ENCODE measurements at regions of chr10 and their contacts with region 1.

Region 1: GRCh38 chr10:28343987-28344897 is 41.4 kb upstream of the MPP7 start:
- DNase-seq: peak; percentile 34
- H3K4me3 ChIP-seq: no peak overlapping the region
- H3K27ac ChIP-seq: no peak overlapping the region
- H3K4me1 ChIP-seq: no peaks in the 10 kb centered on the region
- H3K27me3 ChIP-seq: no peaks in the 10 kb centered on the region
- CTCF ChIP-seq: no peak
- EP300 ChIP-seq: no peak
- POLR2A ChIP-seq: no peak

Region 2: DNA sequence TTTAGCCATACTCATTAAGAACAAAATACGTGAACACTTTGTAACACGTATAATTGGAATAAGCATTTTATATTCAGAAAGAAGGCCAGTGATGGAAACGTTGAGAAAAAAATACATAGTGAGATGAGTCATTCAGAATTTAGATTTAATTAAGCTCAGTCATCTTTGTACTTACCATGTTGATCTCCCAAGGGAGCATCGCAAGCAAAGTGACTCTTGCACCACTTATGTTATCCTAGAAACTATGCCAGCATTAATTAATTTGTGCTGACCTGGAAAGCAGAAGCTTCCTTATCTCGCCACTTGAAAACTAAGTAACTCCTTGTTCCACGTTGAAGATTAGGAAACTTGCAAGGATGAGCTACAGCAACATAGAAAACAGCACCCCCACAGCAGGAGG is 31.7 kb before region 1 on chr10:
- intact Hi-C with region 1: no loop called
- DNase-seq: no peak
- H3K4me3 ChIP-seq: no peak overlapping the region
- H3K27ac ChIP-seq: no peak overlapping the region
- H3K4me1 ChIP-seq: peaks cover 0 to under 1% (median under 1%) of the 10 kb centered on the region in 4 donors
- H3K27me3 ChIP-seq: no peaks in the 10 kb centered on the region
- CTCF ChIP-seq: no peak
- EP300 ChIP-seq: no peak
- POLR2A ChIP-seq: no peak

Region 3: DNA sequence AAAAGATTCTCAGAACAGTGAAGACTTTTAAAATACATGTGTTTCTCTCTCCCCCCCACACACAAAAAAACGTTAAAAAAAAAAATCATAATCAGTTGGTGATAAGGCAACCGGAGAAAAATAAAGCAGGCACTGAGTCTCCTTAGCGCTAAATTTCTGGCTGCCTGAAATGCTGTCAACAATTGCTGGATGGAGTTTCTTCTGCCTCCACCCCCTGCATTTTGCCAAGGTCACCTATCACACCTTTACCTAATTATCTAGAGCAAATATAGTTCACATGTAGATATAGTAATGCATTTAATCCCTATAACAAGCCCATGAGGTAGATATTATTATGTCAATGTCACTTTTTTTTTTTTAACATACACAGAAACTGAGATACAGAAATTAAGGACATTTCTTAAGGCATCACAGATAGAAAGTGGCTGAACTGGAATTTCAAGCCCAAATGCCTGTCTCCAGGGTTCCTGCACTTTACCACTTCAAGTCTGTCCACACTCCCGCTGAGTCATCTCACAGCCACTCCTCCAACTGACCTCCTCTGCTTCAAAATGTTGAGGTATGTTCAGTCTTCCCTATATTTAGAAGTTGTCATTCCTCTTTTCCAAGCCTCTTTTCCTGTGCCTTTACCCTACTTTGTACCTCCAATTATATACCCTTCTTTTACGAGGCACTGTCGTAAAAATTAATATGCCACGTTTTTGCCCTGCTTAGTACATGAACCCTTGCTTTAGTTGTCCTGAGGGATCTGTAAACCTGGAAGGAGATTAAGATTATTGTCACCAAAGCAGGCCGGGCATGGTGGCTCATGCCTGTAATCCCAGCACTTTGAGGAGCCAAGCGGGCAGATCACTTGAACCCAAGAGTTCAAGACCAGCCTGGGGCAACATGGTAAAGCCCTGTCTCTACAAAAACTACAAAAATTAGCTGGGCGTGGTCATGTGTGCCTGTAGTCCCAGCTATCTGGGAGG is 31.4 kb after region 1 on chr10:
- intact Hi-C with region 1: loop called (anchors 5 kb)
- DNase-seq: no peak
- H3K4me3 ChIP-seq: no peak overlapping the region
- H3K27ac ChIP-seq: peak overlapping the region in 1 of 4 donors; percentile 20
- H3K4me1 ChIP-seq: peaks cover 0 to 15% (median 2%) of the 10 kb centered on the region in 4 donors
- H3K27me3 ChIP-seq: no peaks in the 10 kb centered on the region
- CTCF ChIP-seq: no peak
- EP300 ChIP-seq: no peak
- POLR2A ChIP-seq: no peak

Region 4: DNA sequence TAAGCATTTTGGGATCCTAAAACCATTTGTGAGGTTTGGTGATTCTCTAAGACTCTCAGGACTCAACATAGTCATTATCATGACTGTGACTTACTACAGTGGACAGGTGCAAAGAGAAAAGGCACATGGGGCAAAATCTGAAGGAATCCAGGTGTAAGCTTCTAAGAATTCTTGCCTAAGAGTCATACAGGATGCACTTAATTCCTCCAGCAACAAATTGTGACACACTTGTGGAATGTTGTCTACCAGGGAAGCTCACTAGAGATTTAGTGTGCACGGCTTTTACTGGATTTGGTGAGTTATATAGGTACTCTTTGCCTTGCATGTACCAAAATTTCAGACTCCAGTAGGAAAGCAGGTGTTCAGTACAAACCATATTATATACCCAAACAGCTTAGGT is 236.6 kb after region 1 on chr10:
- intact Hi-C with region 1: no loop called
- DNase-seq: no peak
- H3K4me3 ChIP-seq: no peak overlapping the region
- H3K27ac ChIP-seq: no peak overlapping the region
- H3K4me1 ChIP-seq: peaks cover 57 to 75% (median 64%) of the 10 kb centered on the region in 4 donors
- H3K27me3 ChIP-seq: no peaks in the 10 kb centered on the region
- CTCF ChIP-seq: no peak
- EP300 ChIP-seq: no peak
- POLR2A ChIP-seq: no peak